CD4-positive, alpha-beta memory T cell (primary cell): ENCODE measurements at regions of chr20 and their contacts with region 1.

Region 1: GRCh38 chr20:49278036-49278817 is at the start of gene ZNFX1:
- DNase-seq: peak; percentile 99
- H3K4me3 ChIP-seq: peak within 1 kb of the TSS; percentile 86 to 92
- H3K4me3 Mint-ChIP-seq: peak within 1 kb of the TSS; percentile 93 to 99 (median 96)
- H3K27ac ChIP-seq: peak within 1 kb of the TSS; percentile 82
- H3K27ac Mint-ChIP-seq: peak within 1 kb of the TSS; percentile 96 to 99 (median 98)
- H3K4me1 ChIP-seq: peaks cover 70% of the 10 kb centered on the region
- H3K4me1 Mint-ChIP-seq: peaks cover 50 to 83% (median 63%) of the 10 kb centered on the region in 4 donors
- H3K27me3 ChIP-seq: no peaks in the 10 kb centered on the region
- H3K27me3 Mint-ChIP-seq: peaks cover 0 to 1% of the 10 kb centered on the region in 2 donors
- total RNA-seq, gene ZNFX1: 73.8 to 78.4 TPM

Region 2: DNA sequence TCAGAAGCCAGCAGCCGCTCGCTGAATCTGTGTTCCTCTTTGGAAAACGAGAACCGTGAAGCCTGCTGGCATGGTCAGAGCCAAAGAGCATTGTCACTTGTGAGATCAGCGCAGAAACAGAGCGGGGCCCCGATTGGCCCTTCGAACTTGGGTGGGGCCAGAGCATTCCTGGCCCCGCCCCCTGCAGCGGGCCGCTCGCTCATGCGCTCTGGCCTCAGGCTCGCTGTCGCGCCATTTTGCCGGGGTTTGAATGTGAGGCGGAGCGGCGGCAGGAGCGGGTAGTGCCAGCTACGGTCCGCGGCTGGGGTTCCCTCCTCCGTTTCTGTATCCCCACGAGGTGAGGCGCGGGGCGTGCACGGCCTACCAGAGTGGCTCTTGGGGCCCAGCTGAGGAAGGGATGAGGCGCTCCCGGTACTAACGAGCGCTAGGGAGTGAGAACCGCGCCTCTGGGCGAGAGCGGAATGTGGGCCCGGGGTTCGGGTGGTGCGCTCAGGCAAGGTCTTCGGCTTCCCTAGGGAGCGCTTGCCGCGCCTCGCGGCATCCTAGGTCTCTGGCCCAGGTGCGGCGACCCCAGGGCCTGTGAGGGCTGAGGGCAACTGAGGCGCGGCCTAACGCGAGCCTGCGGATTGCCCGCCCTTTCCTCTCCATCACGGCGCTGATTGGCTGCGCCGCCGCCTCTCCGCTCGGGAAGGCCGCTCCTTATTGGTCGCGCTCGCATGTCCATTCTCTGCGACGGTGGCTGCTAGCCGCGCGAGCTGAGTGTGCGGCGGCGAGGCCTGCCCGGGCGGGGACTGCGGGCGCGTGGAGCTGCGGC is 231.9 kb before region 1 on chr20 and contains the start of gene CSE1L:
- CTCF ChIA-PET with region 1: no interaction called
- POLR2A ChIA-PET with region 1: interaction called, 12 read pairs
- intact Hi-C with region 1: loop called (anchors 1 kb)
- DNase-seq: peak; percentile 93 to 97 (median 94)
- H3K4me3 ChIP-seq: peak within 1 kb of the TSS; percentile 99 to 100
- H3K4me3 Mint-ChIP-seq: peak within 1 kb of the TSS; percentile 97 to 99 (median 98)
- H3K27ac ChIP-seq: peak within 1 kb of the TSS; percentile 87
- H3K27ac Mint-ChIP-seq: peak within 1 kb of the TSS; percentile 98 to 99 (median 99)
- H3K4me1 ChIP-seq: peaks cover 40% of the 10 kb centered on the region
- H3K4me1 Mint-ChIP-seq: peaks cover 24 to 49% (median 38%) of the 10 kb centered on the region in 4 donors
- H3K27me3 ChIP-seq: no peaks in the 10 kb centered on the region
- H3K27me3 Mint-ChIP-seq: no peaks in the 10 kb centered on the region
- total RNA-seq, gene CSE1L: 44.5 to 45.8 TPM

Region 3: DNA sequence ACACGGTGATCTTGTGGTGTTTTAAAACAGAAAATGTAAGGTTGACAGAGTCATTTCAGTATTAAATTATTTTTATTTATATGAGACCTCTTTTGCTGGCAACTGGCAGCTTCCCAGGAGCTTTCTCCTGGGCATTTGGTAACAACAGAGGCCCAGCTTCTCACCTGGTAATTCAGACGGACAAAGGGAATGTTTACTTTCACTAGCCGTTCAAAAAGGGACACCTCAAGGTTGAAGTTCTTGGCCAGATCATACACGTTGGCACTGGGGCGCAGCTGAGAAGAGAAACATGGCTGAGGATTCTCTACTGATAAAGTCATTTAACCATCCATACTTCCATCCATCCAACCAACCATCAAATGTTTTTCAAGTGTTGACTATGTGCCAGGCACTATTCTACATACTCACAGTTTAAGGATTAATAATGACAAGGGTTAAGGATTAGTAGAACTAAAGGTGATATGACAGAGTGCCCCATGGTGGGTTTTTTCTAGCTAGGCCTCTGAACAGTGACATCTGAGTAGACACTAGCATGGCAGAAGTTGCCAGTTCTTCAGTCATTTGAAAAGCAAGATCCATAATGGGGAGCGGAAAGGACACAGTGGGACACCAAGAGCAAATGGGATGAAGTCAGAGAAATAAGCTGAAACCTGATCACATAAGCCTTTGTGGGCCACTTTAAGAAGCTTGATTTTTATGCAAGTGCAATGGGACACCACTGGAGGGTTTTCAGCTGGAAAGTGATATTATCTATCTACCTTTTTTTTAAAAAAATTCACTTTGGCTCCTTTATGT is 25.5 kb before region 1 on chr20:
- CTCF ChIA-PET with region 1: interaction called, 3 read pairs
- POLR2A ChIA-PET with region 1: interaction called, 13 read pairs
- intact Hi-C with region 1: no loop called
- DNase-seq: no peak
- H3K4me3 ChIP-seq: no peak overlapping the region
- H3K4me3 Mint-ChIP-seq: no peak overlapping the region
- H3K27ac ChIP-seq: no peak overlapping the region
- H3K27ac Mint-ChIP-seq: peak overlapping the region in 3 of 7 donors; percentile 10 to 38 (median 35)
- H3K4me1 ChIP-seq: no peaks in the 10 kb centered on the region
- H3K4me1 Mint-ChIP-seq: no peaks in the 10 kb centered on the region
- H3K27me3 ChIP-seq: no peaks in the 10 kb centered on the region
- H3K27me3 Mint-ChIP-seq: no peaks in the 10 kb centered on the region

Region 4: GRCh38 chr20:49318430-49319207 is 40.4 kb after region 1 on chr20:
- CTCF ChIA-PET with region 1: no interaction called
- POLR2A ChIA-PET with region 1: interaction called, 19 read pairs
- intact Hi-C with region 1: loop called (anchors 2 kb)
- DNase-seq: peak; percentile 5 to 48 (median 17)
- H3K4me3 ChIP-seq: peak overlapping the region in 1 of 2 donors; percentile 47
- H3K4me3 Mint-ChIP-seq: peak overlapping the region; percentile 79 to 98 (median 90)
- H3K27ac ChIP-seq: no peak overlapping the region
- H3K27ac Mint-ChIP-seq: peak overlapping the region in 2 of 7 donors; percentile 11 to 54
- H3K4me1 ChIP-seq: peaks cover 22% of the 10 kb centered on the region
- H3K4me1 Mint-ChIP-seq: peaks cover 11 to 18% (median 14%) of the 10 kb centered on the region in 4 donors
- H3K27me3 ChIP-seq: peaks cover 16% of the 10 kb centered on the region
- H3K27me3 Mint-ChIP-seq: peaks cover 35 to 41% of the 10 kb centered on the region in 2 donors

Region 5: GRCh38 chr20:49915378-49916145 is 637.3 kb after region 1 on chr20 and contains the start of gene SPATA2:
- CTCF ChIA-PET with region 1: no interaction called
- POLR2A ChIA-PET with region 1: no interaction called
- intact Hi-C with region 1: loop called (anchors 1 kb)
- DNase-seq: peak; percentile 93 to 97 (median 94)
- H3K4me3 ChIP-seq: peak within 1 kb of the TSS; percentile 85 to 99
- H3K4me3 Mint-ChIP-seq: peak within 1 kb of the TSS; percentile 98 to 99 (median 99)
- H3K27ac ChIP-seq: peak within 1 kb of the TSS; percentile 97
- H3K27ac Mint-ChIP-seq: peak within 1 kb of the TSS; percentile 98 to 100 (median 100)
- H3K4me1 ChIP-seq: peaks cover 24% of the 10 kb centered on the region
- H3K4me1 Mint-ChIP-seq: peaks cover 20 to 47% (median 33%) of the 10 kb centered on the region in 4 donors
- H3K27me3 ChIP-seq: no peaks in the 10 kb centered on the region
- H3K27me3 Mint-ChIP-seq: peaks cover 0 to 2% of the 10 kb centered on the region in 2 donors
- total RNA-seq, gene SPATA2: 8.7 to 9.3 TPM